ENCODE measurements at regions of chr12 and their contacts with region 1.

Region 1: GRCh38 chr12:12630850-12631249 is 19.2 kb downstream of the CREBL2 start:
- DNase-seq: no peak
- ATAC-seq: no peak
- H3K4me3 Mint-ChIP-seq: no peak overlapping the region
- H3K27ac Mint-ChIP-seq: no peak overlapping the region
- H3K4me1 Mint-ChIP-seq: no peaks in the 10 kb centered on the region
- H3K27me3 Mint-ChIP-seq: no peaks in the 10 kb centered on the region
- CTCF ChIP-seq: no peak

Region 2: DNA sequence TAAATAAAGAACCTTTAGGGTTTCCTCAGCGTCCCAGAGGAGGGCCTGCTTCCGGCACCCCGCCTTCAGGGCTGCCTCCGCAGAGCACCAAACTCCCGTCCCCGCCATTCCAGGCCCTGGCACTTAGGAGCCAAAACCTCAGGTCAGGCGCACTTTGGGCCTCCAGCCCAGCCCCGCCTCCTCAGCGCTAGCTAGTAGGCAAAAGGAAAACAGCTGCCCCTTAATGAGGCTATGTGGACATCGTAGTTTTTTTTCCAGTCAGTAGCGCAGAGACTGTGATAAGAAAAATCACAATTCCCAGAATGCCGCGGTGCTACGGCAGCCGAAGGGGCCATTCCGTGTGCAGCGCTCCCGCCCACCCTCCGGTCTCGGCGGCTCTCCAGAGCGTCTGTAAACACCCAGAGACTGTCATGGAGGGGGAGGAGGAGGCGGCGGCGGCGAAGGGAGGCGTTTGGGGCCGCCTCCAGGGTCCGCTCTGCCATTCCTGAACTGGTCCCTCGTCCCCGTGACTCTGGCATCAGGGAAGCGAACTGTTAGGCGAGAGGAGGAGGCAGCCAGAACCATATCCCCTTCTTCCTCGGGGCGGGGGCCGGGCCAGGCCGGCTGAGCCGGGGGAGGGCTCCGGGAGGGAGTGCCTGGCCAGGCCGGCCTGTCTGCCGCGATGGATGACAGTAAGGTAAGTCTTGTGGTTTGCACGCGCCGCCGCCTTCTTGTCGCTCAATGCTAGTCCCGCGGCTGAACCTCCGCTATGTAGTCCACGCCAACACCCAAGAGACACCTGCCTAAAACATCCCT is 19.1 kb before region 1 on chr12 and contains the start of gene CREBL2:
- CTCF ChIA-PET with region 1: interaction called, 12 read pairs
- POLR2A ChIA-PET with region 1: no interaction called
- DNase-seq: peak; percentile 88
- ATAC-seq: peak; percentile 89
- H3K4me3 Mint-ChIP-seq: peak within 1 kb of the TSS; percentile 92
- H3K27ac Mint-ChIP-seq: peak within 1 kb of the TSS; percentile 95
- H3K4me1 Mint-ChIP-seq: peaks cover 28% of the 10 kb centered on the region
- H3K27me3 Mint-ChIP-seq: no peaks in the 10 kb centered on the region
- CTCF ChIP-seq: no peak
- total RNA-seq, gene CREBL2: 17.3 to 19.0 TPM (median 18.9 TPM) in 3 replicates

Measured in WTC11 (cell line).